ENCODE measurements at regions of chr19 and their contacts with region 1.

Region 1: DNA sequence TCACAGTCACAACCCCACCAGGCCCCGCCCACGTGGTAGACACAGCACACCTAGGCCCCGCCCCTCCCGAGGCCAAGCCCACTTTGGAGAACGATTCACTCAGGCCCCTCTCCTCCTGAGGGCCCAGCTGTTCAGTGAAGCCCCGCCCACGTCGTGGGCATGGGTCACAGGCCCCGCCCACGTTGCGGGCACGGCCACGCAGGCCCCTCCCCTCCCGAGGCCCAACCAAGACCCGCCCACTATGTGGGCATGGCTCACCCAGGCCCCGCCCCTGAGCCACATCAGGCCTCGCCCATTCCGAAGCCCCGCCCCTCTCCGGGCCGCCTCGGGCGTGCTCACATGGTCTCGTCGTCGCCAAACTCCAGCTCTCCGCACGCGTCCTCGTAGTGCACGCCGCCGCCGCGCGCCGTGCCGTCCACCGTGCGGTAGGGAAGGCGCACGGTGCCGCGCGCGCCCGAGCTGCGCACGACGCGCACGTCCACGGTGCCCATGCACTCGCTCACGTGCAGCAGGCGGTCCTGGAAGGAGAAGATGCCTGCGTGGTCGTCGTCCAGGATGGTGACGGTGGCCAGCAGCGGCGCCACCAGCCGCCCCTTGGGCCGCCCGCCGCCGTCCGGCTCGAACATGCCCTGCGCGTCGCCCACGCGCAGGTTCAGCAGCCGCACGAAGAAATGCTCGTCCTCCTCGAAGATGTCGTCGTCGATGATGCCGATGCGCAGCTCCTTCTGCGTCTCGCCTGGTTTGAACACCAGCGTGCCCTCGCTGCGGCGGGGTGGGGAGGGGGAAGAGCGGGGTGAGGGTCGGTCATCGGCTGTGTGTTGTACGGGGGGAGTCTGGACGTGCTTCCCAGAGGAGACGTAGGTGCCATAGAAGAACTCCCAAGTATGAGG is 24.0 kb downstream of the SLC8A2 start:
- DNase-seq: peak; percentile 75
- ATAC-seq: peak; percentile 71
- H3K4me3 Mint-ChIP-seq: peak overlapping the region; percentile 53
- H3K27ac Mint-ChIP-seq: peak overlapping the region; percentile 18
- H3K4me1 Mint-ChIP-seq: peaks cover 45% of the 10 kb centered on the region
- H3K27me3 Mint-ChIP-seq: peaks cover 59% of the 10 kb centered on the region

Region 2: DNA sequence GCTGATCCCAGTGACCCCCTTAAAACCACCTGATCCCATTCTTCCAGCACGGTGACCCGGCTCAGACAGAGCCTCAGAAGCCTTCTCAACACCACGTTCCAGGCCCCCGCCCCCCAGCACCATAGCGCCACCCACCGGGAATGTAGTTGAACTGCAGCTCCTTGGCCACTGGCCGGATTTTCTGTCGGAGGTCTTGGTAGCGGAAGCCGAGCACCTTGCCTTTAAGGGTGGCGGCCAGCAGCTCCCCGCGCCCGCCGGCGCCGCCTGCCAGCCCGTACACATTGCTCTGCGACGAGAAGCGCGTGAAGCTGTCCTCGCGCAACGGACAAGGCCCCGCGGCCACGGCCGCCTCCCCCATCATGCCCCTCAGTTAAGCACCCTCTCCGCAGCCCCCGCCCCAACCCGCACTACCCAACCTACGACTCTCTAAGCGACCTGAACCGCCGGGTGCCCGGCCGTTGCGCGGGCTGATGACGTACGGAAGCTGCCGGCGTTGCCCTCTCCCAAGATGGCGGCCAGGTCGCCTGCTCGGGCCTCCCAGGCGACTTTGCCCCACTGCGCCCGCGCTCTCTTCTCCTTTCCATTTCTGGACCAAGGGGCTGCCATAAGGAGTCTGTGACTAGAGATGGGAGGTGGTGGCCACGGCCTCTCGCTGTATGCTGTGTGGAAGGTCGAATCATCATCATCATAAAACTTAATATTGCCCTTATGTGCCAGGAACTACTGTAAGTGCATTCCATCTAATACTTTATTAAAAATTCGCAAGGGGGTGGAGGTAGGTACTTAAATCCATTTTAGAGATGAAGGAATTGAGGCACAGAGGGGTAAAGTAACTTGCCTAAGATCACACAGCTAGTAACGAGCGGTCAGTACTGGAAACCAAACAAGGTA is 36.3 kb after region 1 on chr19 and contains the start of gene KPTN:
- CTCF ChIA-PET with region 1: interaction called, 14 read pairs
- POLR2A ChIA-PET with region 1: no interaction called
- DNase-seq: peak; percentile 93
- ATAC-seq: peak; percentile 91
- H3K4me3 Mint-ChIP-seq: peak within 1 kb of the TSS; percentile 97
- H3K27ac Mint-ChIP-seq: peak within 1 kb of the TSS; percentile 100
- H3K4me1 Mint-ChIP-seq: peaks cover 42% of the 10 kb centered on the region
- H3K27me3 Mint-ChIP-seq: no peaks in the 10 kb centered on the region
- total RNA-seq, gene KPTN: 12.6 to 13.0 TPM